ENCODE measurements at regions of chr14 and their contacts with region 1.

Region 1: GRCh38 chr14:75459099-75459741 is 31.4 kb downstream of the JDP2 start:
- DNase-seq: peak; percentile 99 to 100
- H3K4me3 ChIP-seq: no peak overlapping the region; the same call in 1 of the 2 replicates
- H3K27ac ChIP-seq: peak overlapping the region; percentile 94
- H3K4me1 ChIP-seq: peaks cover 84% of the 10 kb centered on the region
- H3K27me3 ChIP-seq: no peaks in the 10 kb centered on the region
- CTCF ChIP-seq: no peak

Region 2: DNA sequence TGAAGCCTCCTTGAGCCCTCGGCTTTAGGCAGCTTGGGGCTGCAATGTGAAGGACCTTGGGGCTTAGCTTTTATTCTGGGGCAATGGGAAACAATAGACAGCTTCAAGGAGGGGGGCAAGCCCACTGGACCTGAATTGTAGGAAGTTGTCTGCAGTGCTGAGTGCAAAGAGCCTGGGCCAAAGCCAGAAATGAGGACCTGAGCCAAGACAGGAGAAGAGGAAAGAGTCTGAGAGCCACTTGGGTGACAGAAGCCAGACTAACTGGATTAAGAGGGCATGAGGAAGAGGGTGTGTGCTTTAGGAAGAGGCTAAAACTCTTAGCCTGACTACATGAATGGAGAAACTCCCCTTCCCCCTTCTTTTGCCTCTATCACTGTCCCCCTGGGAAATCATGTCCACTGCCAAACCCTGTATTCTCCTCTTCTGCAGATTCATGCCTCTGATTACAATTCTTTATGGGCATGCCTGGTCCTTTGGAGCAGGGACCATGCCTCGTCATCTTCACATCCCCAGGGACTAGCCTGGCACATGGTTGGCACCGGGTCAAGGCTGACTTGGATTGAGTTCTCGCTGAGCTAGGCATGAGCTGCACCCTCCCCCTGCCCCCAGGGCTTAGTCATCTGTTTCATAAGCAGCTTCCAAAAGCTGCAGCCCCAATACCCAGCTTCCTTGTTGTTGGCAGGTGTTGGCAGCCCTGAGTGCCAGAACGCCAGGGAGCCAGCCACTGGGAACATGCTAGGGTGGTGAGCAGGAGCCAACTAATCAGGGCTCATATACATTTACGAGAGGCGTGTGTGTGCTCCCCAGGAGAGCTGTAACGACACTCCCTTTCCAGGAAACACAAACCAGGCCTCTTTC is 59.2 kb before region 1 on chr14:
- CTCF ChIA-PET with region 1: no interaction called
- POLR2A ChIA-PET with region 1: interaction called, 5 read pairs
- intact Hi-C with region 1: loop called (anchors 1 kb)
- DNase-seq: peak; percentile 100
- H3K4me3 ChIP-seq: peak overlapping the region; percentile 17; the same call in 1 of the 2 replicates
- H3K27ac ChIP-seq: peak overlapping the region; percentile 70
- H3K4me1 ChIP-seq: peaks cover 31% of the 10 kb centered on the region
- H3K27me3 ChIP-seq: no peaks in the 10 kb centered on the region
- CTCF ChIP-seq: no peak

Region 3: GRCh38 chr14:75411214-75411540 is 48.0 kb before region 1 on chr14:
- CTCF ChIA-PET with region 1: no interaction called
- POLR2A ChIA-PET with region 1: no interaction called
- intact Hi-C with region 1: no loop called
- DNase-seq: no peak
- H3K4me3 ChIP-seq: no peak overlapping the region
- H3K27ac ChIP-seq: no peak overlapping the region
- H3K4me1 ChIP-seq: no peaks in the 10 kb centered on the region
- H3K27me3 ChIP-seq: no peaks in the 10 kb centered on the region
- CTCF ChIP-seq: no peak

Region 4: DNA sequence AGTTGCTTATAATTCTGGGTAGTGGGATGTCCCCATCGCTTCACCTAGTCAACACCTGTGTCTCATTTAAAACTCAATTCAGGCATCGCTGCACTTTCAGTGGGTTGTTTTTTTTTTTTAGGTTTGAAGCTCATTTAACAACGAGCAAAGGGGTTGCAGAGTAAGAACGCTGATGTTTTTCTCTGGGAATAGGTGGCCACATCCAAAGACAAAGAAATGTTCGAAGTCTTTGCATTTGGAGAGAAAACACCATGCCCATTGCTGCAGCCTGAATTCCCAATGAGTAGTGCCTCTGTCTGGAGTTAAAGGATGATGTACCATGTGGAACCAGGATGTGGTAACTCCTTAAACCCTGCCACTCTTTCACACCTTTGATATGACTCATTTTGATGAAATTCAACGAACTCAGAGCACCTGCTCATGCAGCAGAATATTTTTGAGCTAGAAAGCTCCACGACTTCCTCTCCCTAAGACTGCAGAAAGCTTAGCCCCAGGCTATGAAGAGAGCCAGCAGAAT is 28.0 kb after region 1 on chr14:
- CTCF ChIA-PET with region 1: interaction called, 3 read pairs
- POLR2A ChIA-PET with region 1: interaction called, 3 read pairs
- intact Hi-C with region 1: loop called (anchors 1 kb)
- DNase-seq: peak; percentile 83 to 99
- H3K4me3 ChIP-seq: no peak overlapping the region
- H3K27ac ChIP-seq: 0 out of 2 replicates have a peak overlapping the region, but pooled peaks have one; percentile 5
- H3K4me1 ChIP-seq: peaks cover 18% of the 10 kb centered on the region
- H3K27me3 ChIP-seq: no peaks in the 10 kb centered on the region
- CTCF ChIP-seq: no peak

Region 5: DNA sequence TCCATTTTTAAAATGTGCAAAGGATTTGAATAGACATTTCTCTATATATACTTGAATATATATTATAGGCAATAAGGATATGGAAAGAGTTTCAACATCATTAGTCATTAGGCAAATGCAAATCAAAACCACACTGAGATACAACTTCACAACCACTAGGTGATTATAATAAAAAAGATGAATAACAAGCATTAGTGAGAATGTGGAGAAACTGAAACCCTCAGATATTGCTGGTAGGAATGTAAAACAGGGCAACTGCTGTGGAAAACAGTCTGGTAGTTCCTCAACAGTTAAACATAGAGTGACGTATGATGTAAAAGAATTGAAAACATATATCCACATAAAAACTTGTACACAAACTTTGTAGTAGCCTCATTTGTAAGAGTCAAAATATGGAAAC is 51.3 kb after region 1 on chr14:
- CTCF ChIA-PET with region 1: no interaction called
- POLR2A ChIA-PET with region 1: no interaction called
- intact Hi-C with region 1: no loop called
- DNase-seq: no peak
- H3K4me3 ChIP-seq: no peak overlapping the region
- H3K27ac ChIP-seq: no peak overlapping the region
- H3K4me1 ChIP-seq: no peaks in the 10 kb centered on the region
- H3K27me3 ChIP-seq: no peaks in the 10 kb centered on the region
- CTCF ChIP-seq: no peak

Region 6: DNA sequence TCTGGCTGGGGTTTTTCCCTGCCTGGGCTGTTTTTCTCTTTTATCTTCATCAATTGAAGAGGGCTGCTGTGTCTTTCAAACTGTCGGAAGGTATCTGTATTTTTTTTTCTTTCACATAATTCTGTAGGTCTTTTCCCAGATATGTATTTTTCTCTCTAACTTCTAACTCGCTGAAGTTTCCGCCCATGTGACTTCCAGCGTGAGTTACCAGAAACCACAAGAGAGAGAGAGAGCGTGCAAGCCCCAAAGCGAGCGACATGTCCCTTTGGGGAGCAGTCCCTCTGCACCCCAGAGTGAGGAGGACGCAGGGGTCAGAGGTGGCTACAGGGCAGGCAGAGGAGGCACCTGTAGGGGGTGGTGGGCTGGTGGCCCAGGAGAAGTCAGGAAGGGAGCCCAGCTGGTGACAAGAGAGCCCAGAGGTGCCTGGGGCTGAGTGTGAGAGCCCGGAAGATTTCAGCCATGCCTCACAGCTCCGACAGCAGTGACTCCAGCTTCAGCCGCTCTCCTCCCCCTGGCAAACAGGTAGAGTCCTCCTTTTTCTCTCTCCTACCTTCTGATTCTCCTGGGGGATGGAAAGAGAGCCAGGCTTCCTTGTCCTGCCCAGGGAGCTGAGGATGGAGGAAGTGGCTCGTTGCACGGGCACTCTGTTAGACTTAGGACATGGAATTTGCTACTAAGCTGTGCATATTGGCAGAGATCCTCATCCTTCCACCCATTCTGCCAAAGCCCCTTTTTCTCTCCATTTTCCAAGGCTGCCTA is 63.2 kb after region 1 on chr14 and contains the start of gene BATF:
- CTCF ChIA-PET with region 1: interaction called, 3 read pairs
- POLR2A ChIA-PET with region 1: no interaction called
- intact Hi-C with region 1: loop called (anchors 1 kb)
- DNase-seq: peak; percentile 69 to 74
- H3K4me3 ChIP-seq: peak within 1 kb of the TSS; percentile 68
- H3K27ac ChIP-seq: peak within 1 kb of the TSS; percentile 93
- H3K4me1 ChIP-seq: peaks cover 60% of the 10 kb centered on the region
- H3K27me3 ChIP-seq: no peaks in the 10 kb centered on the region
- CTCF ChIP-seq: no peak
- total RNA-seq, gene BATF: 55.7 and 79.0 TPM in 2 replicates

Region 7: GRCh38 chr14:75597149-75597548 is 137.9 kb after region 1 on chr14:
- CTCF ChIA-PET with region 1: no interaction called
- POLR2A ChIA-PET with region 1: no interaction called
- intact Hi-C with region 1: no loop called
- DNase-seq: no peak
- H3K4me3 ChIP-seq: no peak overlapping the region
- H3K27ac ChIP-seq: no peak overlapping the region
- H3K4me1 ChIP-seq: no peaks in the 10 kb centered on the region
- H3K27me3 ChIP-seq: no peaks in the 10 kb centered on the region
- CTCF ChIP-seq: no peak

Measured in PC-9 (cell line).